Activated CD4-positive, alpha-beta memory T cell treated with anti-CD3 and anti-CD28 coated beads for 36 hours (primary cell): ENCODE measurements at regions of chr2 and their contacts with region 1.

Region 1: GRCh38 chr2:126527836-126528507 is 128.0 kb upstream of the GYPC start:
- DNase-seq: peak; percentile 73
- H3K4me3 Mint-ChIP-seq: no peak overlapping the region
- H3K27ac Mint-ChIP-seq: no peak overlapping the region
- H3K4me1 Mint-ChIP-seq: no peaks in the 10 kb centered on the region
- H3K27me3 Mint-ChIP-seq: no peaks in the 10 kb centered on the region

Region 2: DNA sequence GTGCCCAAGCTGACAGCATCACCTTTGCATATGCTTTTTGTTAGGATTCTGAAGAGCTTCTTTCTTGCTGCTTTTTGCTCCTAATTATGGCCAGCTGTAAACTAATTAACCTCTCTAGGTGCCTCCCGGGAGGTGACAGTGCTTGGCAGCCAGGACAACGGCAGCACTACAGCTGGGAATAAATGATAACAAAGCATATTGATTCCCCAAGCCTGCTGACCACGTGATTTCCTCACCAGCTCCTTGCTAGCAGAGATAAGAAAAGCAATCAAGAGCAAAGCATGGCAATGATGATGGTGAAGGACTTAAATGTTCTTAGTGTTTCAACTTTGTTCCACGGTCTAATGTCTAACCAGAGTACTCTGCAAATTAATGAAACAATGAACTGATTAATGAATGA is 946.4 kb before region 1 on chr2:
- CTCF ChIA-PET with region 1: no interaction called
- POLR2A ChIA-PET with region 1: no interaction called
- intact Hi-C with region 1: no loop called
- DNase-seq: no peak
- H3K4me3 Mint-ChIP-seq: no peak overlapping the region
- H3K27ac Mint-ChIP-seq: no peak overlapping the region
- H3K4me1 Mint-ChIP-seq: no peaks in the 10 kb centered on the region
- H3K27me3 Mint-ChIP-seq: no peaks in the 10 kb centered on the region

Region 3: GRCh38 chr2:126302043-126302442 is 225.9 kb before region 1 on chr2:
- CTCF ChIA-PET with region 1: no interaction called
- POLR2A ChIA-PET with region 1: no interaction called
- intact Hi-C with region 1: no loop called
- DNase-seq: no peak
- H3K4me3 Mint-ChIP-seq: no peak overlapping the region
- H3K27ac Mint-ChIP-seq: no peak overlapping the region
- H3K4me1 Mint-ChIP-seq: no peaks in the 10 kb centered on the region
- H3K27me3 Mint-ChIP-seq: no peaks in the 10 kb centered on the region

Region 4: DNA sequence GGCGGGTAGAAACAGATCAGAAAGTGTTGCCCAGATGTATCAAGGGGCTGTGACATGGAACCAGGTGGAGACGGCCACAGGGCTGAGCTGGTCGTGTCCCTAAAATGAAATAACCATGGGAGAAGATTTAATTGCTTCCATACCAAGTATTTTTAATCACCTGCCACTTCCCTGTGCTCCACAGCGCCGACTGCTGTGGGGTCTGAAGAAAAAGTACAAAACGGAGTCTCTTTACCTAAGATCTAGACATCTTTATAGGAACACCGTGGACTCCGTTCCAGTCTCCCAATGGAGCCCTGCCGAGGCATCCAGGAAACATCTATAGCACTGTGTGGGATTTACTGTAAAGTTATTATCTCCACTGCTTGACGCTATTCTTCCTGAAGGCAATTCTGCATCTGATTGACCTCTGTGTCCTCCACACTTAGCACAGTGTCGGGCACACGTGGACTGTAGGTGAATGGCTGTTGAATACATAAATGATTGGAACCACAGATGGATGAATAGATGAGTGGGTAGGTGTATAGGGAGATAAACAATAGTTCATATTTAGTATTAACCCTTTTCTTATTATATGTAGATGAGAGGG is 106.4 kb after region 1 on chr2:
- CTCF ChIA-PET with region 1: interaction called, 8 read pairs
- POLR2A ChIA-PET with region 1: no interaction called
- intact Hi-C with region 1: loop called (anchors 1 kb)
- DNase-seq: peak; percentile 31
- H3K4me3 Mint-ChIP-seq: no peak overlapping the region
- H3K27ac Mint-ChIP-seq: no peak overlapping the region
- H3K4me1 Mint-ChIP-seq: no peaks in the 10 kb centered on the region
- H3K27me3 Mint-ChIP-seq: peaks cover 3% of the 10 kb centered on the region

Region 5: DNA sequence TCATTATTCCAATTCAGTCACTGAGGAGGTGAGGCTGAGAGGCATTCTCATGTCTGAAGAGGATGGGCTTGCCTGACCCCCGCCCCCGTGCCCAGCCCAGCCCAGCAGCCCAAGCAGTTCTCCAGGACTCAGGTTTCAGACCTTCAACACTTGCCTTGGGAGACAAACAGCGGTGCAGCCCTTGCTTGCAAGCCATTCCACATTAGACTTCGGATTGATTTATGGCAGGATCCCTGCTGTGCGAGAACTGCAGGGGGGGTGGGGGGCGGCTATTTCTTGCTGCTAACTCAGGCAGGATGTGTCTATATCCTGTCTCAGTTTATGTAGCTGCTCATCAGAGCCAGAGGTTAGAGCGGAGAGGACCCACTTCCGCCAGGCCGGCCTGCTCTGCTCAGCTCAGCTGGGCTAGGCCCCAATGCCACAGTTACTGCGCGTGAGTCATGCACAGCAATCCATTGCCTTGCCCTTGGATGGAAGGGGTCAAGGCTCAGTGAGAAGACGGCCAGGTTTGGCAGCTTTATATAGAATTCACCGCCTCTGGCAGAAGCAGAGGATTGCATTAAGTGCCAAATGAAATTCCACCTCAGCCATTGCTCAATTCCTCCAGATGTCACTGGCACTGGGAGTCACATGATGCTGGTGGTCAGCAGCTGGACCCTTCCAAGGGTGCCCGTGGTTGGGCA is 129.8 kb after region 1 on chr2:
- CTCF ChIA-PET with region 1: interaction called, 4 read pairs
- POLR2A ChIA-PET with region 1: no interaction called
- intact Hi-C with region 1: loop called (anchors 2 kb)
- DNase-seq: peak; percentile 89
- H3K4me3 Mint-ChIP-seq: peak overlapping the region; percentile 91
- H3K27ac Mint-ChIP-seq: peak overlapping the region; percentile 97
- H3K4me1 Mint-ChIP-seq: peaks cover 52% of the 10 kb centered on the region
- H3K27me3 Mint-ChIP-seq: no peaks in the 10 kb centered on the region

Region 6: DNA sequence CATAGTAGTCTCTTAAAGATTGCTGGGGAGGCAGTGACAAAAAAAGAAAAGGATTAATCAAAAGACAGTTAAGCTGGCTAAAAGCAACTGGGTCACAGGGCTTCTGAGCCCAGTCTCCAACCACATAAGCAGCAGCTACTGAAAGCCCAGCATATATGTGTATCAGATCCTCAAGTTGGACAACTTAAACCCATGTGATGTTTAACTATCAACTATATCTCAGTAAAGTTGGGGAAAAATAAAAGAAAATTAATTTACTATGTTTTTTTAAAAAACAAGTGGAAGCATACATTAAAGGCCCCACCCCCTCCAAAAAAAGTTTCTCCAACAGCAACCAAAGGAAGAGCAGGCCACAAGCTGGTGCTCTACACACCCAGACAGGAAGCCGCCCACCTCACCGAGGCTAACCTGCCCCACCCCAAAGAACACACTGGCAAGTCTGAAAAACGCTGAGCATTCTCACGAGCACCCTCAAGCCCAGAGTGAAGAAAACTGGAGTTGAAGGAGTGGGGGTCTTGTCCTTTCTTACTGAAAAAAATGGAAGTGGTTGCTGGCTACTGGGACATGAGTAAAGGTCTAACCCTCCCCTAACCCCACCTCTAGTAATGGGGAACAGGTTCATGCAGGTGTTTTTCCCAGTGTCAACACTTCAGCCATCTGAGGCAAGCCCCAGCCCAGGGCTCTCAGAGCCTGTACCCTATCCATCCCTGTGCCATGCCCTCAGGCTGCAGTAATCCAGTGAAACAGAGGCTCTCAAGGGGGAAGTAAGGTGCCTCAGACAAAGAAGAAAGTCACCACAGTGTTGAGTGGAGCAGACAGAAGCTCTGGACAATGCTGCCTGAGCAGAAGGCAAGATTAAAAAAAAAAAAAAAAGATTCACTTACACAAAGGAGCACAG is 234.3 kb after region 1 on chr2:
- CTCF ChIA-PET with region 1: no interaction called
- POLR2A ChIA-PET with region 1: no interaction called
- intact Hi-C with region 1: loop called (anchors 5 kb)
- DNase-seq: peak; percentile 64
- H3K4me3 Mint-ChIP-seq: no peak overlapping the region
- H3K27ac Mint-ChIP-seq: peak overlapping the region; percentile 35
- H3K4me1 Mint-ChIP-seq: peaks cover 48% of the 10 kb centered on the region
- H3K27me3 Mint-ChIP-seq: no peaks in the 10 kb centered on the region

Region 7: DNA sequence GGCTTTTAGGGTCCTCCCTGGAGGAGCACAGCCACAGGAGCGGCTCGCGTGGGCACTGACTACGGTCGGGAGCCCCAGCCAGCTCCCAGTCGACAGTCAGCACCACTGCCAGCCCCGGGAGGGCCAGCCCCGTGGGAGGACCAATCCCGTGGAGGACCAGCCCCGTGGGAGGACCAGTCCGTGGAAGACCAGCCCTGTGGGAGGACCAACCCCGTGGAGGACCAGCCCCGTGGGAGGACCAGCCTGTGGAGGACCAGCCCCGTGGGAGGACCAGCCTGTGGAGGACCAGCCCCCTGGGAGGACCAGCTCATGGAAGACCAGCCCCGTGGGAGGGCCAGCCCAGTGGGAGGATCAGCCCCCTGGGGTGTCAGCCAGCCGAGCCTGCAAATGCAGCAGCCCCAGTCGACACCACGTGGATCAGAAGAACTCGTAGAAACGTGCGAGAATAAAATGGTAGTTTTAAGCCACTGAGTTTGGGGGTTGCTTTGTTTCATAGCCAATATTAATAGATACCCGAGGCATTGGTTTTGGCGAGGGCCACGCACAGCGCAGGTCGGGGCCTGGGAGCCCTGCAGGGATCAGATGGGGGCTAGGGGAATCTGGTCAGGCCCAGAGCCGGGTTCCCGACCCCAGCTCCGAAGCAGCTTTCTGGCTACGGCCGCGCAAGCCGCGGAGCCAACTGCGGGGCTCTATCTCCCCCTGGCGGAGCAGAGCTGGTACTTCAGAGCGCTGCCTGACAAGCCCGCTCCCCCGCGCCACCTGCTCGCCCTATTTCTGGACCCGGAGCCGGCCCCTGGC is 443.7 kb after region 1 on chr2:
- CTCF ChIA-PET with region 1: interaction called, 17 read pairs
- POLR2A ChIA-PET with region 1: no interaction called
- intact Hi-C with region 1: no loop called
- DNase-seq: peak; percentile 75
- H3K4me3 Mint-ChIP-seq: peak overlapping the region; percentile 46
- H3K27ac Mint-ChIP-seq: no peak overlapping the region
- H3K4me1 Mint-ChIP-seq: no peaks in the 10 kb centered on the region
- H3K27me3 Mint-ChIP-seq: peaks cover 37% of the 10 kb centered on the region